ENCODE measurements at regions of chr9 and their contacts with region 1.

Region 1: GRCh38 chr9:119556129-119556875 is 187.1 kb upstream of the BRINP1 start:
- DNase-seq: peak; percentile 79

Region 2: DNA sequence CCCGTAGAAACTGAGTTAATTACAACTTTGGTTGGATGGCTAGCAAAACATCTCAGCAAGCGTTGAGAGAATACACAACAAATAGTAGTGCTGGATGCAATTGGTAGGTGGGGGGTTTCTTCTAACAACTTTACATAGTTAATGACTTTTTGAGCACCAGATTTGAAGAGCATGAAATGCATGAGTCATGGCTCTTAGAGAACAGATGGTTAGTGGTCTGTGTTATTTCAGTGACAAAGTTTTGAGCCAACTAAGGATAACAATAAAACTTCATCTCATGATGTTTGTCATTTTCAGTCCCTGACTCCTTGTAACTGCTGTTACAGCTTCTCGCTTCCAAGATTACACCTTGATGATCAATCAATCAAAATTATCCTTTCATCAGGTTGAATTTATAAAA is 212.0 kb after region 1 on chr9:
- intact Hi-C with region 1: no loop called
- DNase-seq: no peak

Region 3: GRCh38 chr9:119968836-119969707 is 412.8 kb after region 1 on chr9:
- intact Hi-C with region 1: loop called (anchors 5 kb)
- DNase-seq: peak; percentile 83

Region 4: DNA sequence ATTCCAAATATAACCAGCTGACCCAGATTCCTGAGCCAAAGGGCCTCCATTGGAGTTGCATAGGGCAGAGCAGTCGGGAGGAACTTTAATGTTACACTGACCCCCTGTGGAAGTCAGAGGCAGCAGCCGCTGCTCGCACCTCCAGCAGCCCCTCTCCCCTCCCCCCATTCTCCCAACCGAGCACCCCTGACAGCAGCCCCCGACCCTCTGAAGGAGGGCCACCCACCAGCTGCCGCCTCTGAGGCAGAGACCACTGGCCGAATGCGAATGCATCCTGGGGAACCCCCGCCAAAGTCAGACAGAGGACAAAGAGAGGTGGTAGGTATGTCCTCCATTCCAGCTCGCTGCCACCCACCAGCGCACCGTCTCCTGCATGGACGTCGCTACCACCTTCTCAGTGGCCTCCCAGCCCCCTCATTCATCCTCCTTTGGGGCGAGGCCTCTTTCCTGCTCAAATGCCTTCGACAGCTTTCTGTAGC is 792.7 kb after region 1 on chr9:
- intact Hi-C with region 1: loop called (anchors 1 kb)
- DNase-seq: no peak

Region 5: GRCh38 chr9:120477521-120478001 is 921.3 kb after region 1 on chr9:
- intact Hi-C with region 1: loop called (anchors 10 kb)
- DNase-seq: peak; percentile 79